Motor neuron (in vitro differentiated cells): ENCODE measurements at regions of chr3 and their contacts with region 1.

Region 1: GRCh38 chr3:14791343-14791945 is 27.3 kb upstream of the FGD5 start:
- ATAC-seq: peak; percentile 57 to 91 (median 78)
- H3K4me3 ChIP-seq: no peak overlapping the region
- H3K27ac ChIP-seq: no peak overlapping the region
- H3K4me1 ChIP-seq: peaks cover 7 to 11% of the 10 kb centered on the region in 2 donors

Region 2: DNA sequence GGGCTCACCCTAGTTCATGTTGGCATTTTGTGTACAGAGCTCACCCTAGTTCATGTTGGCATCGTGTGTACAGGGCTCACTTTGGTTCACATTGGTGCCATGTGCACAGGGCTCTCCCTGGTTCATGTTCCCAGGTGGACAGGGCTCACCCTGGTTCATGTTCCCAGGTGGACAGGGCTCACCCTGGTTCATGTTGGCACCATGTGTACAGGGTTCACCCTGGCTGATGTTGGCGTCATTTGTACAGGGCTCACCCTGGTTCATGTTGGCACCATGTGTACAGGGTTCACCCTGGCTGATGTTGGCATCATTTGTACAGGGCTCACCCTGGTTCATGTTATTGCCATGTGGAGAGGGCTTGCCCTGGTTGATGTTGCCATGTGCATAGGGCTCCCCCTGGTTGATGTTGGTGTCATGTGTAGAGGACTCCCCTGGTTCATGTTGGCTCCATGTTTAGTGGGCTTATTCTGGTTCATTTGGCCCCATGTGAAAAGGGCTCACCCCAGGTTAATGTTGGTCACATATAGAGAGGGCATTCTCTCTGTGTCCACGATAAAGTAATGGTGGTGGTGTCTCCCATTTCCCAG is 124.3 kb after region 1 on chr3:
- in situ Hi-C with region 1: loop called in 5 of 9 experiments (anchors 10 to 25 kb)
- ATAC-seq: peak in 4 of 8 experiments; percentile 29 to 52 (median 40)
- H3K4me3 ChIP-seq: no peak overlapping the region
- H3K27ac ChIP-seq: no peak overlapping the region
- H3K4me1 ChIP-seq: no peaks in the 10 kb centered on the region